Colonic mucosa (tissue), 4 donors: ENCODE measurements at regions of chr9 and their contacts with region 1.

Region 1: DNA sequence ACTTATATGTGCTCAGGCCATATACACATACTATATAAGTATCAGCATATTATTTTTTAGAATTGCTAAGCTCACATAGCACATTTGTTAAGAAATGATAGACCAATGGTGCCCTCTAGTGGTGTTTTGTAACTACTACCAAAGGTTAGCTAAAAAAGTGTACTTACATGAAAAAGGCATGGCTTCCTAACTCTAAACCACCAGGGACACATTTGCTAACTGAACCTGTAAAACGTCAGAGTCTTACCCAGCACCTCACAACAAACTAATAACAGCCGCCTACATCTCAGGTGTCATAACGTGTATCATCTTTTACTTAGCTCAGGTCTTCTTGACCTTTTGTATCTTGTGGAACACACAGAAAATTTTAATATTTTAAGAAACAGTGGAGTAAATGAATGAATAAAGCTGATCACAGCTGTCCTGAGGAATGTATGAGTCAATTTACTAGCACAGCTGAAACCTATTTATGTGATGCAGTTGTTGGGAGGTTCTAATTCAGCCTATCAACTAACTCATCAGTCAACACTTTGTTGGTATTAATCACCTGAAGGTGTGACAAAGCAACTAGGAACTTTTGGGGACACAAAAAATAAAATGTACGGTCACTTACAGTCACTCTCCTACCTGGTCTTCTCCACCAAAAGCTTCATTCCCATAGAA is 72.9 kb downstream of the BAAT start:
- DNase-seq: no peak
- H3K4me3 ChIP-seq: no peak overlapping the region
- H3K27ac ChIP-seq: no peak overlapping the region
- H3K4me1 ChIP-seq: no peaks in the 10 kb centered on the region
- H3K27me3 ChIP-seq: no peaks in the 10 kb centered on the region
- CTCF ChIP-seq: peak; percentile 70

Region 2: GRCh38 chr9:100598641-100599145 is 713.2 kb before region 1 on chr9:
- intact Hi-C with region 1: loop called (anchors 5 kb)
- DNase-seq: peak; percentile 91
- H3K4me3 ChIP-seq: peak overlapping the region; percentile 43
- H3K27ac ChIP-seq: no peak overlapping the region
- H3K4me1 ChIP-seq: no peaks in the 10 kb centered on the region
- H3K27me3 ChIP-seq: no peaks in the 10 kb centered on the region
- CTCF ChIP-seq: no peak

Region 3: GRCh38 chr9:100714372-100715099 is 597.4 kb before region 1 on chr9:
- intact Hi-C with region 1: loop called (anchors 2 kb)
- DNase-seq: peak; percentile 66
- H3K4me3 ChIP-seq: no peak overlapping the region
- H3K27ac ChIP-seq: no peak overlapping the region
- H3K4me1 ChIP-seq: no peaks in the 10 kb centered on the region
- H3K27me3 ChIP-seq: no peaks in the 10 kb centered on the region
- CTCF ChIP-seq: peak; percentile 83

Region 4: DNA sequence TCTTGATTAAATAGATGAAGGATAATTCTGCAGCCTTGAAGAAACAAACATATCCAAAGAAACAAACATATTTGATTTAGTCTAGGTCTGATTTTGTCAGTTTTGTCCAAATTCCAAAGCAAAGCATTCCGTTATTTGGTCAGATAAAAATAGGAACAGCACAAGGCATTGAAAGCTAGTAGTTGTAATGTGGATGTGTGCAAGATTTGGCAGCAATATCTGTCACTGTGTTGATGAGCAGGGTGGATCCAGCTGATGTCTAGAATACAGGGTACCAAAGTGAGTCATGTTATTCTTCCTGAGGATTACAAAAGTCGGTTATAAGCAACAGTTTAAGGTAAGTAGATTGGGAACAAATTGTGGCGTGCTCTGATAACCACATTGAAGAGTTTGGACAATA is 352.7 kb before region 1 on chr9:
- intact Hi-C with region 1: no loop called
- DNase-seq: no peak
- H3K4me3 ChIP-seq: no peak overlapping the region
- H3K27ac ChIP-seq: no peak overlapping the region
- H3K4me1 ChIP-seq: no peaks in the 10 kb centered on the region
- H3K27me3 ChIP-seq: no peaks in the 10 kb centered on the region
- CTCF ChIP-seq: no peak

Region 5: GRCh38 chr9:101119206-101119819 is 192.6 kb before region 1 on chr9:
- intact Hi-C with region 1: loop called (anchors 5 kb)
- DNase-seq: peak; percentile 59
- H3K4me3 ChIP-seq: no peak overlapping the region
- H3K27ac ChIP-seq: no peak overlapping the region
- H3K4me1 ChIP-seq: no peaks in the 10 kb centered on the region
- H3K27me3 ChIP-seq: no peaks in the 10 kb centered on the region
- CTCF ChIP-seq: peak; percentile 68

Region 6: DNA sequence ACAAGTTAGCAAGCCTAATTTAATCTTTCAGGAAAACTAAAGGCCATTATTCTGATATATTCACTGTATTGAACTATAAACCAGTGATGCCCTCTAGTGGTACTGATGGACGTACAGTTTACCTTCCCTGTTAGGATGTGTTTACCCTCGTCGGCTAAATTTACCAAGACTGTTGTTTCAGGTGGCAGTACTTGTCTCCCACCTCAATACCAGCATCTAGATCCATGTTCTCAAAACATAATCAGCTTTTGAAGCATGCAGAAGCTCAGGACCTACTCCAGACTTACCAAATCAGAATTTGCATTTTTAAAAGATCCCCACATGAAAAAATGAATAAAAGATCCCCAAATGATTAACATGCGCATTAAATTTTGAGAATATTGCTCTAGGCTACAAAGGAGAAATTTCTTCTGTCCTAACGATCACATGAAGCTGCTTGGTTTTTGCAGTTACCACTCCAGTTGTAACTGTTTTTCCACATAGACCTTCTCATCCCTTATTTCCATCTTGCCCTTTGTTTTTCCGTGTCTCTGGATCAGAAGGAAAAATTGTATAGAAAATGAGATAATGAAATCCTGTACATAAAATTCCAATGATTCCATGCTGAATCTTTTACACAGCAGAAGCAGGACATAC is 76.1 kb after region 1 on chr9:
- intact Hi-C with region 1: loop called (anchors 5 kb)
- DNase-seq: peak; percentile 26
- H3K4me3 ChIP-seq: no peak overlapping the region
- H3K27ac ChIP-seq: no peak overlapping the region
- H3K4me1 ChIP-seq: no peaks in the 10 kb centered on the region
- H3K27me3 ChIP-seq: no peaks in the 10 kb centered on the region
- CTCF ChIP-seq: peak; percentile 38